Panc1 (cell line): ENCODE measurements at regions of chr11 and their contacts with region 1.

Region 1: GRCh38 chr11:61129639-61130523 is 27.6 kb downstream of the CD5 start:
- DNase-seq: peak; percentile 83
- ATAC-seq: peak; percentile 96
- H3K4me3 ChIP-seq: peak overlapping the region in 1 of 2 experiments; percentile 27; a peak in 1 of 4 replicates
- H3K27ac ChIP-seq: peak overlapping the region; percentile 70
- H3K4me1 ChIP-seq: peaks cover 8% of the 10 kb centered on the region
- H3K27me3 ChIP-seq: no peaks in the 10 kb centered on the region
- CTCF ChIP-seq: peak; percentile 100

Region 2: DNA sequence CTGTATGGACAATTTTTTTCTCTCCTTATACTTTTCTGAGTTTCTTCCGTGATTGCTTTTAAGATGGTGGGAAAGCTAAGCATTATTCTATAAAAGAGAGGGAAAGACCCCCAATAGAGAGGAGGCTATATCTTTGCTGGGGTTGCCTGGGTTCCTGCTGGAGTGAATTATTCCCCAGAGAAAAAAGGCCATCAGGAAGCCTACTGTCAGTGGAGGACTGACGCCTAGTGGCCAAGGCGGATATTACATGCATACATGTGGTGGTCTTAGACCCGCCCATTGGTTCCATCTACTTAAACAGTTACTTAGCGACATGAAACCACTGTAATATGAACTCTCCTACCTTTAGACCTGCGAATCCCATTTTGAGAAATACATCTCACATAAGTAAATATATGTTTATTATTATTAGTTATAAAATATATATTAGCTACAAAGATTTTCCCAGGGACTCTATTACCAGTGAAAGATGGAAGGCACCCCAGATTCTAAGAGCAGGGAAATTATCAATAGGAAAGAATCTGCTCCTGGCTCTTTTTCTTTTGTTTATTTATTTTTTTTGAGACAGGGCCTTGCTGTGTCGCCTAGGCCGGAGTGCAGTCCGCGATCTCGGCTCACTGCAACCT is 57.7 kb after region 1 on chr11:
- CTCF ChIA-PET with region 1: no interaction called
- POLR2A ChIA-PET with region 1: no interaction called
- in situ Hi-C with region 1: no loop called
- intact Hi-C with region 1: loop called (anchors 5 kb)
- DNase-seq: peak; percentile 58
- ATAC-seq: peak; percentile 92
- H3K4me3 ChIP-seq: no peak overlapping the region
- H3K27ac ChIP-seq: no peak overlapping the region
- H3K4me1 ChIP-seq: no peaks in the 10 kb centered on the region
- H3K27me3 ChIP-seq: no peaks in the 10 kb centered on the region
- CTCF ChIP-seq: peak; percentile 95

Region 3: DNA sequence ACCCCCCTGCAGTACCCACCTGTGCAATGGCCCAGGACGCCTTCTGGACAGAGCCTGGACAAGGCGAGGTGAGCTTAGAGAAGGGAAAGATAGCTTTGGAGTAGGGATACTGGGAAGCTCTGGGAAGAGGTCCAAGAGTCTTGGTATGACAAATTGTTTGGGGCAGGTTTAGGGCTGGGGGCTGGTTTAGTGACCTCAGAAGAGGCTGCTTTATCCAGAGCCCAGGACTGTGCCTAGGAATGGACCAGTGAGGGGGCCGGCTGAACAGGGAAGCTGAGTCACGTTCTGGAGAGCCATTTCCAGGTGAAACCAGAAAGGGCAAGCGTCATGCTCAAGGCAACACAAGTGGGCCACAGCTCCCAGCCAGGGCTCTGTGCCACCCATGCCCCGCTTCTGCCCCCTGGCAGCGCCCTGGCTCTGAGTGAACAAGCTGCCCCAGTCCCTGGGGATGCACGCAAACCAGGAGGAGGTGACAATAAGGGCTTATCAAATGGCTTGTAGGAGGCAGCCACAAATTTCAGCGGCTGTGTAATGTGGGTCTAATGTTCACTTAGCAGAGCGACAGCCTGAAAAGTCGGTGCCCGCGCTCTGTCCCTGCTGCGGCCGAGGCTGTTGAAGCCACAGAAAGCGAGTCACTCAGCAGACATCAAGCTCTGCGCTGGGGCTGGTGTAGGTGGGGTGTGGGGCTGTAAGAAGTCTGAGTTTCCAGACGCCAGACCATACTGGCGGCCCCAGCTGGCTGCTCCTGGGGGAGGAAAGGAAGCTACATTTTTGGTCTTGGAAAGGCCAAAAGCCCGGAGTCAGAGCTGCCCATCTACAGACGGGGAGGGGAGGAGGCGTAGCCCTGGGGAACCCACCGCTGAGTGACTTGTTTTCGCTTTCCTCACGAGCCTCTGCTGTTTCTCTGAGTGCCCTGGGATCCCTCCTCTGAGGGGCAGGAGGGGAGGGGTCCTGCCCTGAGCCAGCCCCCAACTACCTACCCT is 469.3 kb after region 1 on chr11:
- CTCF ChIA-PET with region 1: no interaction called
- POLR2A ChIA-PET with region 1: no interaction called
- in situ Hi-C with region 1: no loop called
- intact Hi-C with region 1: no loop called
- DNase-seq: no peak
- ATAC-seq: no peak
- H3K4me3 ChIP-seq: no peak overlapping the region
- H3K27ac ChIP-seq: no peak overlapping the region
- H3K4me1 ChIP-seq: peaks cover 3% of the 10 kb centered on the region; the same call in 1 of the 2 replicates
- H3K27me3 ChIP-seq: no peaks in the 10 kb centered on the region
- CTCF ChIP-seq: no peak